ENCODE measurements at regions of chr6 and their contacts with region 1.

Region 1: GRCh38 chr6:107114213-107114905 is 956 bp downstream of the BEND3 start:
- H3K4me3 Mint-ChIP-seq: peak overlapping the region; percentile 78
- H3K27ac Mint-ChIP-seq: peak overlapping the region; percentile 51
- H3K4me1 Mint-ChIP-seq: peaks cover 34% of the 10 kb centered on the region
- H3K27me3 Mint-ChIP-seq: peaks cover 17% of the 10 kb centered on the region

Region 2: GRCh38 chr6:107033126-107033525 is 81.2 kb before region 1 on chr6:
- intact Hi-C with region 1: loop called (anchors 1 kb)
- H3K4me3 Mint-ChIP-seq: no peak overlapping the region
- H3K27ac Mint-ChIP-seq: no peak overlapping the region
- H3K4me1 Mint-ChIP-seq: peaks cover 34% of the 10 kb centered on the region
- H3K27me3 Mint-ChIP-seq: no peaks in the 10 kb centered on the region

Region 3: GRCh38 chr6:107144014-107144413 is 29.7 kb after region 1 on chr6:
- intact Hi-C with region 1: no loop called
- H3K4me3 Mint-ChIP-seq: no peak overlapping the region
- H3K27ac Mint-ChIP-seq: no peak overlapping the region
- H3K4me1 Mint-ChIP-seq: no peaks in the 10 kb centered on the region
- H3K27me3 Mint-ChIP-seq: no peaks in the 10 kb centered on the region

Region 4: DNA sequence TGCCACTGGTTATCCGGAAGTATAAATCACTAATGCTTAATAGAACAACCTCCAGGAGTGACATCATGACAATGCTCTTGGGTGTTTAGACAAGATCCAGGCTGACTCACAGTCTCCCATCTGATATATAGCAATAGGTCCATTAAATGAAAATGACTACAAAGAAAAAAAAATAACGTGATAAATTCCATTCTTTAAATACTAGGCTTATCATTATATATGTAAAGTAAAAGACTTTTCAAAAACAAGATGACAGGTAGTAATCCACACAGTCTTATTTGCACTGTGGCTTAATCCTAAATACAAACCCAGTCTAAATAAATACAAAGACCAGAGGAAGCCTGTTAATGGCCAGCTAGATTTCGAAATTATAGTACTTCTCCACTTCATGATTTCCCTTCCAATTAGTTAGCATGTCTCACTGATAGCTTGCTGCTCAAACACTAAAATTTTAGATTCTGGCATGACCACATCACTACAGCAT is 150.0 kb after region 1 on chr6:
- intact Hi-C with region 1: no loop called
- H3K4me3 Mint-ChIP-seq: no peak overlapping the region
- H3K27ac Mint-ChIP-seq: no peak overlapping the region
- H3K4me1 Mint-ChIP-seq: no peaks in the 10 kb centered on the region
- H3K27me3 Mint-ChIP-seq: no peaks in the 10 kb centered on the region